Activated CD8-positive, alpha-beta T cell treated with anti-CD3 and anti-CD28 coated beads for 36 hours (primary cell): ENCODE measurements at regions of chr3 and their contacts with region 1.

Region 1: GRCh38 chr3:48439820-48440589 is at the starts of genes CCDC51 and TMA7:
- DNase-seq: peak; percentile 99
- ATAC-seq: peak; percentile 98
- H3K4me3 Mint-ChIP-seq: peak within 1 kb of the TSS; percentile 89
- H3K27ac Mint-ChIP-seq: peak within 1 kb of the TSS; percentile 97
- H3K4me1 Mint-ChIP-seq: peaks cover 30% of the 10 kb centered on the region
- H3K27me3 Mint-ChIP-seq: no peaks in the 10 kb centered on the region
- CTCF ChIP-seq: no peak
- total RNA-seq, gene CCDC51: 25.3 to 28.3 TPM
- total RNA-seq, gene TMA7: 312 to 334 TPM

Region 2: DNA sequence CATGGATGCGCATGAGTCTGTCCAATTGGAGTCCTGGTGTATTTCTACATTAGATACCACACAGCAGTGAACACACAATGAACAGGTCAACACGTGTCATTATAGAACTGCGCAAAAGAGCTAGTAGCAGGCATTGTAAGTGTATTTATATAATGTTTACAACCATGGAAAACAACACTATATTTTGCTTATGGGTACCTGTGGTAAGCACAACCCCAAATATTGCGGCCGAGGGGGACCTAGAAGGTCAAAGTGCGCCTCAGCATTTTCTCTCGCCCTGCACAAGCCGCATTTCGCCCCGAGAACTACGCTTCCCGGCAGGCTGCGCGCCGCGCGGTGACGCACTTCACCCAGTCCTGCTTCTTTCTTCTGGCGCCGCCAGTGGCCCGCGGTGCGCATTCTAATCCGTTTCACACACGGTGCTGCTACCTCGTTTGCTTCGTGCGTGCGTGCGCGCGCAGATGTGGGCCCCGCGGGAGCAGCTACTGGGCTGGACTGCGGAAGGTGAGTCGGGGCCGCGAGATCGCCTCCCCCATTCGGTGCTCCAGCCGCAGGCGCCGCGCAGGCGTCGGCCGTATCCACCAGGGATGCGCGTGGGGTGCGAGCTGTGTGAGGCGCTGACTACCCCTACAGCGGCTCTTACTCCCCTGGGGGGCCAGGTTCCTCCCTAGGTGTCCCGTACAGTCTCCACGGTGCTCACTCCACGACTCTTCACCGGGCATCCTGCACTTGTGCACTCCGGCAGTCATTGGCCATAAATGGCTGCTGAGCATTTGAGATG is 199.1 kb before region 1 on chr3 and contains the start of gene ZNF589:
- CTCF ChIA-PET with region 1: interaction called, 91 read pairs
- POLR2A ChIA-PET with region 1: interaction called, 6 read pairs
- intact Hi-C with region 1: no loop called
- DNase-seq: peak; percentile 99
- ATAC-seq: peak; percentile 99
- H3K4me3 Mint-ChIP-seq: peak within 1 kb of the TSS; percentile 87
- H3K27ac Mint-ChIP-seq: peak within 1 kb of the TSS; percentile 94
- H3K4me1 Mint-ChIP-seq: peaks cover 24% of the 10 kb centered on the region
- H3K27me3 Mint-ChIP-seq: no peaks in the 10 kb centered on the region
- CTCF ChIP-seq: peak; percentile 19
- total RNA-seq, gene ZNF589: 30.4 to 32.8 TPM

Region 3: GRCh38 chr3:48285132-48285531 is 154.9 kb before region 1 on chr3:
- CTCF ChIA-PET with region 1: interaction called, 54 read pairs
- POLR2A ChIA-PET with region 1: no interaction called
- intact Hi-C with region 1: no loop called
- DNase-seq: no peak
- ATAC-seq: no peak
- H3K4me3 Mint-ChIP-seq: no peak overlapping the region
- H3K27ac Mint-ChIP-seq: no peak overlapping the region
- H3K4me1 Mint-ChIP-seq: no peaks in the 10 kb centered on the region
- H3K27me3 Mint-ChIP-seq: no peaks in the 10 kb centered on the region
- CTCF ChIP-seq: no peak

Region 4: GRCh38 chr3:48352547-48352946 is 87.5 kb before region 1 on chr3:
- CTCF ChIA-PET with region 1: no interaction called
- POLR2A ChIA-PET with region 1: no interaction called
- intact Hi-C with region 1: no loop called
- DNase-seq: no peak
- ATAC-seq: no peak
- H3K4me3 Mint-ChIP-seq: no peak overlapping the region
- H3K27ac Mint-ChIP-seq: no peak overlapping the region
- H3K4me1 Mint-ChIP-seq: no peaks in the 10 kb centered on the region
- H3K27me3 Mint-ChIP-seq: peaks cover 14% of the 10 kb centered on the region
- CTCF ChIP-seq: no peak

Region 5: GRCh38 chr3:48394391-48394790 is 45.6 kb before region 1 on chr3:
- CTCF ChIA-PET with region 1: interaction called, 312 read pairs
- POLR2A ChIA-PET with region 1: no interaction called
- intact Hi-C with region 1: no loop called
- DNase-seq: no peak
- ATAC-seq: peak; percentile 55
- H3K4me3 Mint-ChIP-seq: no peak overlapping the region
- H3K27ac Mint-ChIP-seq: no peak overlapping the region
- H3K4me1 Mint-ChIP-seq: no peaks in the 10 kb centered on the region
- H3K27me3 Mint-ChIP-seq: peaks cover 6% of the 10 kb centered on the region
- CTCF ChIP-seq: no peak

Region 6: GRCh38 chr3:48428088-48428829 is 11.7 kb before region 1 on chr3:
- CTCF ChIA-PET with region 1: interaction called, 18 read pairs
- POLR2A ChIA-PET with region 1: interaction called, 8 read pairs
- intact Hi-C with region 1: no loop called
- DNase-seq: no peak
- ATAC-seq: no peak
- H3K4me3 Mint-ChIP-seq: peak overlapping the region; percentile 25
- H3K27ac Mint-ChIP-seq: no peak overlapping the region
- H3K4me1 Mint-ChIP-seq: peaks cover 4% of the 10 kb centered on the region
- H3K27me3 Mint-ChIP-seq: peaks cover 6% of the 10 kb centered on the region
- CTCF ChIP-seq: no peak

Region 7: DNA sequence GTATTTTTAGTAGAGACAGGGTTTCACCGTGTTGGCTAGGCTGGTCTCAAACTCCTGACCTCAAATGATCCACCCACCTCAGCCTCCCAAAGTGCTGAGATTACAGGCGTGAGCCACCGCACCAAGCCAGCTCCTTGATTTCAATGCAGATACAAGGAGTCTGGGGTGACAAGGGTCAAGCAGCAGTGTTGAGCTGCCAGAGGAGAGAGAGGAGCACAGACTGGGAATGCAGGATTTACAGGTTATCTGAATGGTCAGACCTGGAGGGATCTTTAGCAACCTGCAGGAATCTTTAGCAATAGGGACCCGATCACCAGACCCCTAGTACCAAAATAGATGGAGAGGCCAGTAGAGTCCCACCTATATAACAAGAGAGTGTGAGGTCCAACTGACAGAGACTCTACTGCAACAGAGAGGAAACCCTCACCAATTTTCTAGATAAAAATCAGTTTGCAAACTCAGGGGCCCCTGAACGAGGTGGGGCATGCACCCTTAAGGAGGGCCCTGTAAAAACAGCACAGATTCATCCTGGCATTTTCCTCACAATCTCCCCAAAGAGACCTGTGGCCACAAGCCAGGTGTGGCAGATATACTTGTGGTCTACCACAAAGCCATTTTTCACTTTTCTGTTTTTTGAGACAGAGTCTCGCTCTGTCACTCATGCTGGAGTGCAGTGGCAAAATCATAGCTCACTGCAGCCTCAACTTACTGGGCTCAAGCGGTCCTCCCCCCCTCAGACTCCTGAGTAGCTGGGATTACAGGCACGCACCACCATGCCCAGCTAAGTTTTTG is 74.6 kb after region 1 on chr3:
- CTCF ChIA-PET with region 1: interaction called, 31 read pairs
- POLR2A ChIA-PET with region 1: no interaction called
- intact Hi-C with region 1: no loop called
- DNase-seq: peak; percentile 46
- ATAC-seq: peak; percentile 37
- H3K4me3 Mint-ChIP-seq: no peak overlapping the region
- H3K27ac Mint-ChIP-seq: no peak overlapping the region
- H3K4me1 Mint-ChIP-seq: peaks cover 44% of the 10 kb centered on the region
- H3K27me3 Mint-ChIP-seq: no peaks in the 10 kb centered on the region
- CTCF ChIP-seq: no peak